ENCODE measurements at regions of chr6 and their contacts with region 1.

Region 1: GRCh38 chr6:129598244-129599187 is 111.5 kb downstream of the ARHGAP18 start:
- DNase-seq: no peak
- ATAC-seq: peak; percentile 83
- H3K4me3 ChIP-seq: no peak overlapping the region
- H3K27ac ChIP-seq: no peak overlapping the region
- H3K4me1 ChIP-seq: no peaks in the 10 kb centered on the region
- H3K27me3 ChIP-seq: no peaks in the 10 kb centered on the region

Region 2: GRCh38 chr6:129730477-129731165 is 132.1 kb after region 1 on chr6:
- intact Hi-C with region 1: loop called (anchors 5 kb)
- DNase-seq: no peak
- ATAC-seq: no peak
- H3K4me3 ChIP-seq: no peak overlapping the region
- H3K27ac ChIP-seq: no peak overlapping the region
- H3K4me1 ChIP-seq: no peaks in the 10 kb centered on the region
- H3K27me3 ChIP-seq: no peaks in the 10 kb centered on the region

Measured in aorta (tissue), 5 donors.